ENCODE measurements at regions of chr1 and their contacts with region 1.

Region 1: GRCh38 chr1:37474046-37474759 is at the start of gene ZC3H12A:
- DNase-seq: peak; percentile 96
- ATAC-seq: peak; percentile 46
- H3K4me3 Mint-ChIP-seq: peak within 1 kb of the TSS; percentile 95
- H3K27ac Mint-ChIP-seq: peak within 1 kb of the TSS; percentile 98
- H3K4me1 Mint-ChIP-seq: peaks cover 42% of the 10 kb centered on the region
- H3K27me3 Mint-ChIP-seq: no peaks in the 10 kb centered on the region
- total RNA-seq, gene ZC3H12A: 29.7 to 31.2 TPM

Region 2: GRCh38 chr1:35930593-35931445 is 1543.4 kb before region 1 on chr1 and contains the start of gene AGO3:
- CTCF ChIA-PET with region 1: no interaction called
- POLR2A ChIA-PET with region 1: no interaction called
- intact Hi-C with region 1: loop called in 1 of 2 experiments (anchors 10 kb)
- DNase-seq: peak; percentile 95
- ATAC-seq: peak; percentile 95
- H3K4me3 Mint-ChIP-seq: peak within 1 kb of the TSS; percentile 92
- H3K27ac Mint-ChIP-seq: peak within 1 kb of the TSS; percentile 94
- H3K4me1 Mint-ChIP-seq: peaks cover 37% of the 10 kb centered on the region
- H3K27me3 Mint-ChIP-seq: no peaks in the 10 kb centered on the region
- total RNA-seq, gene AGO3: 23.3 to 33.8 TPM

Region 3: GRCh38 chr1:36463803-36464604 is 1010.2 kb before region 1 on chr1 and contains the start of gene MRPS15:
- CTCF ChIA-PET with region 1: no interaction called
- POLR2A ChIA-PET with region 1: no interaction called
- intact Hi-C with region 1: loop called in 1 of 2 experiments (anchors 1 kb)
- DNase-seq: peak; percentile 98
- ATAC-seq: peak; percentile 94
- H3K4me3 Mint-ChIP-seq: peak within 1 kb of the TSS; percentile 97
- H3K27ac Mint-ChIP-seq: peak within 1 kb of the TSS; percentile 97
- H3K4me1 Mint-ChIP-seq: peaks cover 31% of the 10 kb centered on the region
- H3K27me3 Mint-ChIP-seq: no peaks in the 10 kb centered on the region
- total RNA-seq, gene MRPS15: 123 to 169 TPM

Region 4: GRCh38 chr1:37486680-37487618 is 12.7 kb after region 1 on chr1:
- CTCF ChIA-PET with region 1: interaction called, 63 read pairs
- POLR2A ChIA-PET with region 1: interaction called, 30 read pairs
- intact Hi-C with region 1: loop called in 1 of 2 experiments (anchors 1 kb)
- DNase-seq: peak; percentile 87
- ATAC-seq: peak; percentile 74
- H3K4me3 Mint-ChIP-seq: no peak overlapping the region
- H3K27ac Mint-ChIP-seq: peak overlapping the region; percentile 56
- H3K4me1 Mint-ChIP-seq: peaks cover 17% of the 10 kb centered on the region
- H3K27me3 Mint-ChIP-seq: no peaks in the 10 kb centered on the region

Region 5: GRCh38 chr1:37553927-37554808 is 80.0 kb after region 1 on chr1 and contains the start of gene SNIP1:
- CTCF ChIA-PET with region 1: no interaction called
- POLR2A ChIA-PET with region 1: interaction called, 8 read pairs
- intact Hi-C with region 1: loop called (anchors 1 to 5 kb)
- DNase-seq: peak; percentile 95
- ATAC-seq: peak; percentile 93
- H3K4me3 Mint-ChIP-seq: peak within 1 kb of the TSS; percentile 92
- H3K27ac Mint-ChIP-seq: peak within 1 kb of the TSS; percentile 95
- H3K4me1 Mint-ChIP-seq: peaks cover 36% of the 10 kb centered on the region
- H3K27me3 Mint-ChIP-seq: no peaks in the 10 kb centered on the region
- total RNA-seq, gene SNIP1: 18.7 to 21.3 TPM

Region 6: DNA sequence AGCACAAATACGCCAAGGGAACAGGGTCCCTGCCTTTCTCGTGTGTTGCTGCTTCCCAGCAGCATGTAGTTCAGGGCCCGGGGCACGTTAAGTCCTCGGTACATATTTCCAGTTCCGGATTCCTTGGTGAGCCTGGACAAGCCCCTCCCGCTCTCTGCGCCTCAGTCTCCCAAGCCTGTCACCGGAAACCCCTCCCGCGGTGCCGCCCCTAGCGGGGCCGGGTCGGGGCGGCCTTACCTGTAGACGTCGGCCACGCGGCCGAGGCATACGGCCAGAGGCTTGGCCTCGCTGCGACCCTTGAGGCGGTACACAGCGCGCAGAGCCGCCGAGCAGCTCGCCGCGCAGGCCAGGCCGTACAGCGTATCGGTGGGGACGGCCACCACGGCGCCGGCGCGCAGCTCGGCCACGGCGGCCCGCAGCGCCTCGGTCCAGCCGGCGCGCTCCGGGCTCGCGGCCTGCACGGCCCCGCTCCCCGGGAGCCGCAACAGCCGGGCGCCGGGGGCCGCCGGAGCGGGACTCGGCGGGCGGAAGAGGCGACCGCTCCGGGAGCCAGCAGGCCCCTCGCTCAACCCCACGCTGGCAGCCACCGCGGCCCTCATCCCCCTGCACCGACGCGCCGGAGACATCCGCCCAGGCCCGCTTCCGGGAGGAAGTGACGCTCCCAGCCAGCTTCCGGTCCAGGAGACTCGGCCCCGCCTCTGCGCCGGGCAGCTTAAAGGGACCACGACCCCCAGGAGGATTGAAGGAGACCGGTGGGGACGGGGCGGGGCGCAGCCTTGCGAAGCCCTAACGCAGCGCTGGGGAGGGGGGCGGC is 333.6 kb after region 1 on chr1 and contains the starts of genes C1orf122 and YRDC:
- CTCF ChIA-PET with region 1: interaction called, 4 read pairs
- POLR2A ChIA-PET with region 1: no interaction called
- intact Hi-C with region 1: loop called in 1 of 2 experiments (anchors 1 kb)
- DNase-seq: peak; percentile 95
- ATAC-seq: peak; percentile 92
- H3K4me3 Mint-ChIP-seq: peak within 1 kb of the TSS; percentile 90
- H3K27ac Mint-ChIP-seq: peak within 1 kb of the TSS; percentile 93
- H3K4me1 Mint-ChIP-seq: peaks cover 34% of the 10 kb centered on the region
- H3K27me3 Mint-ChIP-seq: no peaks in the 10 kb centered on the region
- total RNA-seq, gene C1orf122: 10.8 to 17.9 TPM
- total RNA-seq, gene YRDC: 22.9 to 36.3 TPM

Region 7: DNA sequence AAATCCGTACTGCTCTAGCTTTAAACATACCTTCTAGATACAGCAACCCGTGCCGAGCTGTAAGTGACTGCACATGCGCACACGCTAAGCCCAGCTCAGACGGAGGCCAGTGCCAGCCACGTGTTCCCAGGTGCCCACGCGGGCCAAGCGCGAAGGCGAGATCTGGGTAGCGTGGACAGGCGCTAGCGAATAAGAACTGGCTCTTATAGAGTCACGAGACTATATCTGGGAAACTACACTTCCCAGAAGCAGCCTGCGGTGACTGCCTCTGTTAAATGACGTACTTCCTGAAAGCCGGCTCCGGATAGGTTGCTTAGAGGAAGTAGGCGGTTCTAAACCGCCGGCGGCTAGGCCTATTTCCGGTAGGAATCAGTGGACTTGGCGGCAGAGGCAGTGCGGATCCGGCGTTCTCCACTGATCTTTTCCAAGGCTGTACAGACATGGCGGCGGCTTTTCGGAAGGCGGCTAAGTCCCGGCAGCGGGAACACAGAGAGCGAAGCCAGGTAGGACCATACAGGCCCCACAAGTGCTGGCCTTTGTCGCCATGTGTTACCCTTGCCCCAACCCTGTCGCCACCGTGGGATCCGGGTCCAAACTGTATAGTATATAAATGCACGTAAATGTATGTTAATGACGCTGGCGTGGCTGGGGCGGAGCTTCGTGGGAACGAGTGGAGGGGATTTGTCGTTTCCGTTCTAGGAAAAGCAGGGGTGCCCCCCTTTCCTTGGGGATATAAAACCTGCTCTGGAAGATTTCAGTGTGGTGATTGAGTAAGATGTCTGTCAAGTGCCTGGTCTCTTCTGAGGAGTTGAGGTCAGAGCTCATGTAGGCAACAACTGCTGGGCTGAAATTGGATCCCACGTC is 538.4 kb after region 1 on chr1 and contains the start of gene UTP11:
- CTCF ChIA-PET with region 1: no interaction called
- POLR2A ChIA-PET with region 1: interaction called, 3 read pairs
- intact Hi-C with region 1: loop called in 1 of 2 experiments (anchors 2 kb)
- DNase-seq: peak; percentile 94
- ATAC-seq: peak; percentile 81
- H3K4me3 Mint-ChIP-seq: peak within 1 kb of the TSS; percentile 97
- H3K27ac Mint-ChIP-seq: peak within 1 kb of the TSS; percentile 95
- H3K4me1 Mint-ChIP-seq: peaks cover 51% of the 10 kb centered on the region
- H3K27me3 Mint-ChIP-seq: no peaks in the 10 kb centered on the region
- total RNA-seq, gene UTP11: 68.9 to 82.4 TPM

Region 8: DNA sequence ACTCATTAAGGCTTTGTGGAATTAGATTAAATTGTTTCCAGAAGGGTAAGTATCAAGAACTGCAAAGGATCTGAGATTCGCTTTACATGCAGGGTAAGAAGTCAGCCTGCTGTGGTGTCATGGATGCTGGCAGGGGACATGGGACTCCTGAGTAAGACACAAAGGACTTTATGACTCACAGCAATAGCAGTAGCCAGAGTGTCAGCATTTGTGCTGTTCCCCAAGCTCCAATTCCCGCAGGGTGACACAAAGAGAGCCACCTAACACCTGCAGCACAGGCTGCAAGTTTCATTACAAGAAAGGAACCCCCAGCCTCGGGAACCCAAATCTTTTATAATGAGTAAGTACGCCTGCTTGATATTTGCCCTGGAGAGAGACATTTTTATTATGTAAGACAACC is 870.5 kb after region 1 on chr1:
- CTCF ChIA-PET with region 1: no interaction called
- POLR2A ChIA-PET with region 1: no interaction called
- intact Hi-C with region 1: no loop called
- DNase-seq: peak; percentile 50
- ATAC-seq: peak; percentile 87
- H3K4me3 Mint-ChIP-seq: no peak overlapping the region
- H3K27ac Mint-ChIP-seq: no peak overlapping the region
- H3K4me1 Mint-ChIP-seq: peaks cover 4% of the 10 kb centered on the region
- H3K27me3 Mint-ChIP-seq: peaks cover 15% of the 10 kb centered on the region